ENCODE measurements at regions of chr17 and their contacts with region 1.

Region 1: GRCh38 chr17:29617125-29617480 is 5.6 kb downstream of the CORO6 start:
- DNase-seq: peak; percentile 89 to 94 (median 91)
- H3K4me3 ChIP-seq: peak overlapping the region; percentile 64 to 89
- H3K4me3 Mint-ChIP-seq: peak overlapping the region; percentile 82 to 94 (median 92)
- H3K27ac ChIP-seq: peak overlapping the region; percentile 43
- H3K27ac Mint-ChIP-seq: peak overlapping the region; percentile 63 to 89 (median 81)
- H3K4me1 ChIP-seq: peaks cover 62% of the 10 kb centered on the region
- H3K4me1 Mint-ChIP-seq: peaks cover 20 to 51% (median 33%) of the 10 kb centered on the region in 4 donors
- H3K27me3 ChIP-seq: no peaks in the 10 kb centered on the region
- H3K27me3 Mint-ChIP-seq: no peaks in the 10 kb centered on the region

Region 2: DNA sequence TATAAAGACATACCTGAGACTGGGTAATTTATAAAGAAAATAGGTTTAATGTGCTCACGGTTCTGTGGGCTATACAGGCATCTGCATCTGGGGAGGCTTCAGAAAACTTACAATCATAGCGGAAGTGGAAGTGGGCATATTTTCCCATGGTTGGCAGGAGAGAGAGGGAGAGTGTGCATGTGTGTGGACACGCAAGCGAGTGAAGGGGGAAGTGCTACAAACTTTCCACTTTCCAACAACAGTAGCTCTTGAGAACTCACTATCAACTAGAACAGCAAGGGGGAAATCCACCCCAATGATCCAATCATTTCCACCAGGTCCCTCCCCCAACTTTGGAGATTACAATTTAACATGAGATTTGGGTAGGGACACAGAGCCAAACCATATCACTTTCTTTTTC is 215.8 kb before region 1 on chr17:
- CTCF ChIA-PET with region 1: no interaction called
- POLR2A ChIA-PET with region 1: no interaction called
- intact Hi-C with region 1: no loop called
- DNase-seq: no peak
- H3K4me3 ChIP-seq: no peak overlapping the region
- H3K4me3 Mint-ChIP-seq: no peak overlapping the region
- H3K27ac ChIP-seq: no peak overlapping the region
- H3K27ac Mint-ChIP-seq: peak overlapping the region in 2 of 7 donors; percentile 37 to 50
- H3K4me1 ChIP-seq: peaks cover 18% of the 10 kb centered on the region
- H3K4me1 Mint-ChIP-seq: peaks cover 18 to 36% (median 26%) of the 10 kb centered on the region in 4 donors
- H3K27me3 ChIP-seq: no peaks in the 10 kb centered on the region
- H3K27me3 Mint-ChIP-seq: no peaks in the 10 kb centered on the region

Region 3: DNA sequence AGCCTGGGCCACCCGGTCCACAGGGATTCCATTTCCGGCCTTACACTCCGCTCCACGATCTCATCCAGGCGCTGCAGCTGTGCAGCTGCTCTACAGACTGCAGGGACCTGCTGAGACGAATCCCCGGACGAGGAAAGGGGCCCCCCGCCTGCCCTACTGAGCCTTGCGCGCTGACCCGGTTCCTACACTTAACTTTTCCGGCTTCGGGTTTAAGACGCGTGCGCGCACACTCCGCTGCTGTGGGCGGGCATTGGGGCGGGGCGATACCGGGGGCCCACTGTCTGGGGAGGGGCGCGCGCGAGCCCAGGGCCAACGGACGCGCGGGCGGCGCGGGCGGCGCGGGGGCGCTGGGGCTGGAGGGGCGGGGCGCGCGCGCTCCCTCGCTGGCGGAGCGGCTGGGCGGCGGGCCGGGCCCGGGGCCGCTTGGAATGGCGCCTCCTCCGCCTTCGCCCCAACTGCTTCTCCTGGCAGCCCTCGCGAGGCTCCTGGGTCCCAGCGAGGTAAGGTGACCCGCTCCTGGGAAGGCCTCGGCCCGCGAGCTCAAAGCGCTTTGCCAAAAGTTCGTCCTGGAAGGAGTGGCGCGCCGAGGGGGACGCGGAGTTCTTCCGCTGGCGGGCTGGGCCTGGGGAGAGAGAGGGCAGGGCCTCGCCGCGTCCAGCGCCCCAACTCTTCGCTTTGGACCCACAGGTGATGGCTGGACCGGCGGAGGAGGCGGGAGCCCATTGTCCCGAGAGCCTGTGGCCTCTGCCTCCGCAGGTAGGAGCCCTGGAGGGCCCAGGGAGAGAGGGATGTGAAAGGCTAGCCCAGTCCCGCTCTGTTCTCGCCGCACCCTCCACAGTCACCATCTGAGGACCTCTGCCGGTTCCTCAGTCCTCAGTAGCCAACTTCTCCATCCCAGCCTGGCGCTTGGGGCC is 48.5 kb before region 1 on chr17 and contains the start of gene TP53I13:
- CTCF ChIA-PET with region 1: interaction called, 523 read pairs
- POLR2A ChIA-PET with region 1: interaction called, 119 read pairs
- intact Hi-C with region 1: loop called (anchors 1 kb)
- DNase-seq: peak; percentile 78 to 86 (median 83)
- H3K4me3 ChIP-seq: peak within 1 kb of the TSS; percentile 58 to 83
- H3K4me3 Mint-ChIP-seq: peak within 1 kb of the TSS; percentile 92 to 98 (median 96)
- H3K27ac ChIP-seq: peak within 1 kb of the TSS; percentile 61
- H3K27ac Mint-ChIP-seq: peak within 1 kb of the TSS; percentile 92 to 98 (median 95)
- H3K4me1 ChIP-seq: peaks cover 31% of the 10 kb centered on the region
- H3K4me1 Mint-ChIP-seq: peaks cover 23 to 55% (median 34%) of the 10 kb centered on the region in 4 donors
- H3K27me3 ChIP-seq: no peaks in the 10 kb centered on the region
- H3K27me3 Mint-ChIP-seq: no peaks in the 10 kb centered on the region
- total RNA-seq, gene TP53I13: 149 to 158 TPM

Region 4: DNA sequence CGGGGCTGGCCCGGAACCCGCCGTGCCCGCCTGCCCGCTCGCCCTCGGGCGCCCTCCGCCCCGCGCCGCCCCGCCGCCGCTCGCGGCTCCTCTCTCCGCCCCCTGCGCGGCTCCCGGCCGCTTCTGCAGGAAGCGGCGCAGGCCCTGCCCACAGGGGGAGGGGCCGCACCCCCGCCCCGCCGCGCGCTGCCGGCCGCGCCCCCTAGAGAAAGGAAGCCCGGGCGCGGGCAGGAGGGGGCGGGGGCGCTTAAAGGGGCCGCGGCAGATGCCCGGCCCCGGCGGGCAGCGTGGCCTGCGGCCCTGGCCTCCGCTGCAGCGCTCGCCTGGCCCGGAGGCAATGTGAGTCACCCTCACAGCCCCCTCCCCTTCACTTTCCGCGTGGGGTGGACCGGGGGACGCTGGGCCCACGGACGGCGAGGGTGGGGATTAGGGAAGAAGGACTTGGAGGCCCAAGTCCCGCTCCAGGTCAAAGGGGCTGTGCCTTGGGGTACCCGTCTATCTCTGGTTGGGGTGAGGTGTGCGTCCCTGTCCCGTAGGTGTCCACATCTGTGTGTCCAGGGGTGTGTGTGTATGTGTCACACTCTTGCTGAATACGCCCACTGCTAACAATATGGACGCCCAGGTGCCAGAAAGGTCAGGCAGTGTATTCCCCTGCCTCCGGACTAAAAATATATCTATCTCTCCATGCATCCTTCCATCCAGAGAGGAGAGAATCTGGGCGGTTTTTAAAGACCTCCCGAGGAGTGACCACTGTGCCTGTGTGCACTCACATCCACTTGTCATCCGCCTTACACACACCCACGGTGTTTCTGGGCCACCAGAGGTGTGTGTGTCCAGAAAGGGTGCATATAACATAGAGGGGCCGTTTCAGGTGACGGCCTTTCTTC is 27.3 kb before region 1 on chr17 and contains the start of gene GIT1:
- CTCF ChIA-PET with region 1: interaction called, 523 read pairs
- POLR2A ChIA-PET with region 1: interaction called, 127 read pairs
- intact Hi-C with region 1: loop called (anchors 1 kb)
- DNase-seq: peak; percentile 81 to 86 (median 85)
- H3K4me3 ChIP-seq: peak within 1 kb of the TSS; percentile 61 to 82
- H3K4me3 Mint-ChIP-seq: peak within 1 kb of the TSS; percentile 93 to 97 (median 95)
- H3K27ac ChIP-seq: peak within 1 kb of the TSS; percentile 70
- H3K27ac Mint-ChIP-seq: peak within 1 kb of the TSS; percentile 86 to 97 (median 92)
- H3K4me1 ChIP-seq: peaks cover 82% of the 10 kb centered on the region
- H3K4me1 Mint-ChIP-seq: peaks cover 30 to 71% (median 53%) of the 10 kb centered on the region in 4 donors
- H3K27me3 ChIP-seq: no peaks in the 10 kb centered on the region
- H3K27me3 Mint-ChIP-seq: no peaks in the 10 kb centered on the region
- total RNA-seq, gene GIT1: 78.9 to 82.8 TPM

Region 5: GRCh38 chr17:29640413-29640812 is 23.3 kb after region 1 on chr17:
- CTCF ChIA-PET with region 1: interaction called, 13 read pairs
- POLR2A ChIA-PET with region 1: interaction called, 14 read pairs
- intact Hi-C with region 1: no loop called
- DNase-seq: no peak
- H3K4me3 ChIP-seq: no peak overlapping the region
- H3K4me3 Mint-ChIP-seq: no peak overlapping the region
- H3K27ac ChIP-seq: no peak overlapping the region
- H3K27ac Mint-ChIP-seq: peak overlapping the region in 5 of 7 donors; percentile 60 to 96 (median 75)
- H3K4me1 ChIP-seq: no peaks in the 10 kb centered on the region
- H3K4me1 Mint-ChIP-seq: peaks cover 7 to 19% (median 13%) of the 10 kb centered on the region in 4 donors
- H3K27me3 ChIP-seq: no peaks in the 10 kb centered on the region
- H3K27me3 Mint-ChIP-seq: no peaks in the 10 kb centered on the region

Region 6: DNA sequence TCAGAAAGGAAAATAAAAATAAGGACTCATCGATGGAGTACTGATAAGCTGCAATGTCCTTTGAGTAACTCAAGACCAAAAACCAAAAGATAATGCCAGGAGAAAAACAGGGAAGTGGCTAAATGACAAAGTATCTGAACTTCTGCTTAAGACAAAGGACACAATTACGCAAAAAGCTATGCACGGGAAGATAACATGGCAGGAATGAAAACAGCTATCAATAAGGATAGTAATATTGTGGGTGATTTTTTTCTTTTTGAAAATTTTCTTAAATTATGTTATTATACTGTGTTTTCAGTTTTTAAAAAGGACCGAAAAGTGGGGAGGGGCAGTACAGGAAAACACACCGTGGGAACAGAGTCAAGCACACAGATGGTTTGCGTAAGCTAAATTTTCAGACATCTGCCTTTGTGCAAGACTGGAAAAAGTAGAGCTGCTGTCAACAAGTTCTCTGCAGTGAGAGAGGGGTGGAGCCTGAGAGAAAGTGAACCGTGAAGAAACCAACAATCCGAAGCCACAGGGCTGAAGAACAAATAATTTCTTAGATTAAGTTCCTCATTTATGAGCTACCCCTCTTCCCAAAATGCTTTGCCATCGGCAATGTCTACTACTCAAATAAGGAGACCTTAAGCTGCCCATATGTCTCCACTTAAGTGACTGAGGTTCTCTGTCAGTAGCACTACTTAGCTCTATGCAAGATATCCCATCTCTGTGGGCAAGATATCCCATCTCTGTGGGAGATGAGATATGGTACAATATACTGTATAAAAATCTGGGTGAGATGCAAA is 105.5 kb after region 1 on chr17:
- CTCF ChIA-PET with region 1: interaction called, 11 read pairs
- POLR2A ChIA-PET with region 1: interaction called, 18 read pairs
- intact Hi-C with region 1: no loop called
- DNase-seq: peak; percentile 51 to 73 (median 57)
- H3K4me3 ChIP-seq: peak overlapping the region; percentile 1 to 6
- H3K4me3 Mint-ChIP-seq: peak overlapping the region; percentile 49 to 85 (median 74)
- H3K27ac ChIP-seq: peak overlapping the region; percentile 5
- H3K27ac Mint-ChIP-seq: peak overlapping the region; percentile 66 to 94 (median 81)
- H3K4me1 ChIP-seq: peaks cover 71% of the 10 kb centered on the region
- H3K4me1 Mint-ChIP-seq: peaks cover 58 to 82% (median 70%) of the 10 kb centered on the region in 4 donors
- H3K27me3 ChIP-seq: no peaks in the 10 kb centered on the region
- H3K27me3 Mint-ChIP-seq: no peaks in the 10 kb centered on the region

Region 7: GRCh38 chr17:30035369-30035768 is 418.3 kb after region 1 on chr17:
- CTCF ChIA-PET with region 1: no interaction called
- POLR2A ChIA-PET with region 1: no interaction called
- intact Hi-C with region 1: no loop called
- DNase-seq: no peak
- H3K4me3 ChIP-seq: no peak overlapping the region
- H3K4me3 Mint-ChIP-seq: no peak overlapping the region
- H3K27ac ChIP-seq: no peak overlapping the region
- H3K27ac Mint-ChIP-seq: no peak overlapping the region
- H3K4me1 ChIP-seq: no peaks in the 10 kb centered on the region
- H3K4me1 Mint-ChIP-seq: peaks cover 0 to 2% (median 0%) of the 10 kb centered on the region in 4 donors
- H3K27me3 ChIP-seq: peaks cover 3% of the 10 kb centered on the region
- H3K27me3 Mint-ChIP-seq: peaks cover 2 to 11% of the 10 kb centered on the region in 2 donors

Region 8: GRCh38 chr17:30093463-30094147 is 476.5 kb after region 1 on chr17:
- CTCF ChIA-PET with region 1: no interaction called
- POLR2A ChIA-PET with region 1: no interaction called
- intact Hi-C with region 1: loop called (anchors 10 kb)
- DNase-seq: peak; percentile 41 to 66 (median 52)
- H3K4me3 ChIP-seq: no peak overlapping the region
- H3K4me3 Mint-ChIP-seq: peak overlapping the region in 1 of 8 donors; percentile 24
- H3K27ac ChIP-seq: no peak overlapping the region
- H3K27ac Mint-ChIP-seq: no peak overlapping the region
- H3K4me1 ChIP-seq: peaks cover 6% of the 10 kb centered on the region
- H3K4me1 Mint-ChIP-seq: peaks cover 0 to 8% (median 3%) of the 10 kb centered on the region in 4 donors
- H3K27me3 ChIP-seq: no peaks in the 10 kb centered on the region
- H3K27me3 Mint-ChIP-seq: peaks cover 15 to 29% of the 10 kb centered on the region in 2 donors

Measured in CD4-positive, alpha-beta memory T cell (primary cell).